AG04450 (cell line): ENCODE measurements at regions of chr4 and their contacts with region 1.

Region 1: DNA sequence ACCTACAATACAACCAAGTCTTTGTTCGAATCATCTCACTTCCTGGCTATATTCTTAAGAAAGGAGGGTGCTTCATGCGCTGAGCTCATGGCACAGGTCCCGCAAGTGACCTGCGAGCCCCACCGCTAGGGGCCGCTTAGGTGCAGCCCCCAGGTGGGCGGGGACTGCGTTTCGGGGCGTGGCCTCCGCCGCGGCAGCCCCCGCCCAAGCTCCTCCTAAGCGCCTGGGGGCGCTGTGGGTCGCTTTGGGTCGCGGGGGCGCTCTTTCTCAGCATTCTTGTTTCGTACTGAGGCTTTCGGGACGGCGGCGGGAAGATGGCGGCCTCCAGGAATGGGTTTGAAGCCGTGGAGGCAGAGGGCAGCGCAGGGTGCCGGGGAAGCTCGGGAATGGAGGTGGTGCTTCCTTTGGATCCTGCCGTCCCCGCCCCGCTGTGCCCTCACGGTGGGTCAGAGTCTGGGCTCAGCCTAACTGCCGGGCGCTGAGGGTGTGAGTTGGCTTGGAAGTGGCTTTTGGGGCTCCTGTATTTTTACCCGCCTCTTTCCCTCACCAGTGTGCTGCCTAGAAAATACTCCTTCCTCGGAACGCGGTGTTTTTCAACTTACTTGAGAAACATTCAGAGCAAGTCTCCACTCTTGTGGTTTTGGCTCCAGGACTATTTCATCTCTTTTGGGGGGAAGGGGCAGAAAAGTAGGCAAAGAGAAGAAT is at the start of gene ZCCHC4:
- DNase-seq: peak; percentile 82
- H3K4me3 ChIP-seq: peak within 1 kb of the TSS; percentile 92
- H3K27ac ChIP-seq: peak within 1 kb of the TSS; percentile 82
- H3K27me3 ChIP-seq: no peaks in the 10 kb centered on the region
- CTCF ChIP-seq: peak; percentile 99
- polyA plus RNA-seq, gene ZCCHC4: 11.4 and 13.1 TPM in 2 replicates

Region 2: DNA sequence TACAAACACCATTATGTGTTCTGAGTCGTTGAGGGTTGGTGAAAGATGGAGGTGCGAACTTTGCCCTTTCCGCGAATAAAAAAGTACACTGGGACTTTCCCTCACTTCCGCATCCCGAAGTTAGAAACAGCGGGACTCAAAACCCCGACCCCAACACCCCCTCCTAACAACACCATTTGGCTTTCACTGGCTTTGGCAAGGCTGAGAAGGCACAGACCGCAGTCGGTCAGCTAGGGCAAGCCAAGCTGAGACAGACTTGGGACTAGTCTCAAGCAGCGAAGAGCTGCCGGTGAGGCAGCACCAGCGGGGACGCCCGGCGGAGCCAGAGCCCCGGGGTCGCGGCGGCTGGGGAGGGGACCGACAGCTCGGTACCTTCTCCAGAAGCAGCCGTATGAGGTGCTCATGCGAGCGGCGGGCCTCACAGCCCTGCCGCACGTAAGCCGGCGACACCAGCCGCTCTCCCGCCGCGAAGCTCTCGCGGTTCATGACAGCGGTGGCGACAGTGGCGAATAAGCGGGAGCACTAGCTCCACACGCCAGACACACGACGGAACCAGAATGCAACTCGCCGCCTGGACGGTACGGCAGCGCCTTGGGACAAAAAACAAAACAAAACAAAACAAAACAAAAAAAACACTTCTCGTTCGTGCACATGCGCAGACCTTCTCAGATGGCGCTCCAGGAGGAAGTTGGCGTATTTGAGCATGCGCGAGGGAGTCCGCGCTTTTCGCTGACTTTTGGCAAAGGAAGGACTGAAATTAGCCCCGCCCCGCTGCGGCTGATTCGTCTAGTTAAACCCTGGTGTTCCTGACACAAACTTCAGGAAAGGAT is 152.5 kb before region 1 on chr4 and contains the start of gene SEPSECS:
- CTCF ChIA-PET with region 1: interaction called, 30 read pairs
- POLR2A ChIA-PET with region 1: no interaction called
- DNase-seq: peak; percentile 94
- H3K4me3 ChIP-seq: peak within 1 kb of the TSS; percentile 89
- H3K27ac ChIP-seq: peak within 1 kb of the TSS; percentile 82
- H3K27me3 ChIP-seq: no peaks in the 10 kb centered on the region
- CTCF ChIP-seq: no peak
- polyA plus RNA-seq, gene SEPSECS: 4.7 and 6.2 TPM in 2 replicates

Region 3: GRCh38 chr4:25234390-25235370 is 78.0 kb before region 1 on chr4:
- CTCF ChIA-PET with region 1: interaction called, 53 read pairs
- POLR2A ChIA-PET with region 1: no interaction called
- DNase-seq: peak; percentile 42
- H3K4me3 ChIP-seq: peak overlapping the region; percentile 89
- H3K27ac ChIP-seq: peak overlapping the region; percentile 82
- H3K27me3 ChIP-seq: no peaks in the 10 kb centered on the region
- CTCF ChIP-seq: peak; percentile 58

Region 4: GRCh38 chr4:25284466-25284865 is 28.2 kb before region 1 on chr4:
- CTCF ChIA-PET with region 1: interaction called, 24 read pairs
- POLR2A ChIA-PET with region 1: no interaction called
- DNase-seq: no peak
- H3K4me3 ChIP-seq: no peak overlapping the region
- H3K27ac ChIP-seq: no peak overlapping the region
- H3K27me3 ChIP-seq: no peaks in the 10 kb centered on the region
- CTCF ChIP-seq: no peak

Region 5: GRCh38 chr4:25330905-25331808 is 18.5 kb after region 1 on chr4:
- CTCF ChIA-PET with region 1: interaction called, 71 read pairs
- POLR2A ChIA-PET with region 1: no interaction called
- DNase-seq: no peak
- H3K4me3 ChIP-seq: 0 out of 2 replicates have a peak overlapping the region, but pooled peaks have one; percentile 7
- H3K27ac ChIP-seq: no peak overlapping the region
- H3K27me3 ChIP-seq: no peaks in the 10 kb centered on the region
- CTCF ChIP-seq: no peak

Region 6: DNA sequence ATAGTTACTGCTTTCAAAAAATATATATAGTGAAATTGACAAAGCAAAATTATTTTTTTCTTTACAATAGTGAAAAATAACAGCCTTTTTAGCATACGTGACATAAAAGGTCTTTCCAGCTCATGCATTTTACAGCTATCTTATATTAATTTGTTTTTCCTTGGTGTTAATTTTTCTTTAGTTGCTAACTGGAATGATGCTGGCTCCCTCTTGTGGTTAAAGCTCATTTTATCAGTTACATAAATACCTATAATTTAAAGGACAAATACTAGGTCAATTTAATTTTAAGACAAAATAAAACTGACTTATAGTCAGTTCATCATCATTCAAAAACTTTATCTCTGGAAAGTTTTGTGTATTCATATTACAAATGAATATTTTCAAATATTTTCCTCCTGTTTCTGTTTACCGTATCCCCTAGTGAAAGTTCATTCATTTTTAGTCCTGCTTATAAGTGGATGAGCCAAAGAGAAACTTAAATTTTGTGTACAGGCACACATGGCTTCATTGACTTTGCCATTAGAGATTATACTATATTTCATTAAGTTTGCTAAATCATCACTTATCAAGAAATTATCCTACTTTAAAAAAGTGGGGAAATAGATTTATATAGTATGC is 54.5 kb after region 1 on chr4:
- CTCF ChIA-PET with region 1: interaction called, 78 read pairs
- POLR2A ChIA-PET with region 1: interaction called, 3 read pairs
- DNase-seq: peak; percentile 16
- H3K4me3 ChIP-seq: no peak overlapping the region
- H3K27ac ChIP-seq: no peak overlapping the region
- H3K27me3 ChIP-seq: no peaks in the 10 kb centered on the region
- CTCF ChIP-seq: peak; percentile 72